CD4-positive, alpha-beta T cell (primary cell): ENCODE measurements at regions of chr3 and their contacts with region 1.

Region 1: GRCh38 chr3:42961633-42962032 is 17.5 kb upstream of the GASK1A start:
- DNase-seq: peak in 7 of 14 experiments; percentile 4 to 66 (median 54)
- ATAC-seq: no peak
- H3K4me3 ChIP-seq: no peak overlapping the region
- H3K4me3 Mint-ChIP-seq: no peak overlapping the region
- H3K27ac ChIP-seq: no peak overlapping the region
- H3K27ac Mint-ChIP-seq: no peak overlapping the region
- H3K4me1 ChIP-seq: peaks cover 12% of the 10 kb centered on the region
- H3K4me1 Mint-ChIP-seq: peaks cover 37% of the 10 kb centered on the region
- H3K27me3 ChIP-seq: no peaks in the 10 kb centered on the region
- H3K27me3 Mint-ChIP-seq: peaks cover 4% of the 10 kb centered on the region
- CTCF ChIP-seq: peak; percentile 71

Region 2: DNA sequence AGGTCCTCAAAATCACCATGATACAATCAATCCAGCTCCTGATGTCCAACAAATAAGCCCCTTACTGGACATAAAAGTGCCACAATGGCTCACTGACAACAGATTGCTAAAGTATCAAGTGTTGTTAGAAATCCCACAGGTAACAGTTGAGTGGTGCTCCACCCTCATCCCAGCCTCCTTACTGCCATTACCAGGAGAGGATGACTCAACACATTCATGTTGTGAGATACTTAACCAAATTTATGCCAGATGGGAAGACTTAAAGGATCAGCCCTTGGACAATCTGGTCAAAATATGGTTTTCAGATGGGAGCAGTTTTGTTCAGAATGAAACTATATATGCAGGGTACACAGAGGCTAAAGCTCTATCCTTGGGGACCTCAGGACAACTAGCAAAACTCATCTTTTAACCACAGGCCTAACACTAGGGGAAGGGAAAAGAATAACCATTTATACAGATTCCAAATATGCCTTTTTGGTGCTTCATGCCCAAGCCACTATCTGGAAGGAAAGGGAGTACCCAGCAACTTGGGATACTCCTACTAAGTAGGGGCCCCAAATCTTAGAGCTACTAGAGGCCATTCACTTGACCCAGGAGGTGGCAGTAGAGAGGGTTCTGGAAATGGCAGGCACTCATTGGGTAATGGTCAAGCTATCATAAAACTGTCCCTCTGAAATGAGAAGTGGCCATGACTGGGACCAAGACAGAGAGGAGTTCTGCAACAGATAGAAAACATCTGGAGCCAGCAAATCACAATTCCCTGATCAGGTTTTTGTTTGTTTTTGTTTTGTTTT is 62.6 kb before region 1 on chr3:
- CTCF ChIA-PET with region 1: no interaction called
- POLR2A ChIA-PET with region 1: no interaction called
- intact Hi-C with region 1: no loop called
- DNase-seq: no peak
- ATAC-seq: no peak
- H3K4me3 ChIP-seq: no peak overlapping the region
- H3K4me3 Mint-ChIP-seq: no peak overlapping the region
- H3K27ac ChIP-seq: no peak overlapping the region
- H3K27ac Mint-ChIP-seq: no peak overlapping the region
- H3K4me1 ChIP-seq: no peaks in the 10 kb centered on the region
- H3K4me1 Mint-ChIP-seq: no peaks in the 10 kb centered on the region
- H3K27me3 ChIP-seq: peaks cover 0 to 6% of the 10 kb centered on the region in 2 experiments
- H3K27me3 Mint-ChIP-seq: peaks cover 13% of the 10 kb centered on the region
- CTCF ChIP-seq: no peak

Region 3: DNA sequence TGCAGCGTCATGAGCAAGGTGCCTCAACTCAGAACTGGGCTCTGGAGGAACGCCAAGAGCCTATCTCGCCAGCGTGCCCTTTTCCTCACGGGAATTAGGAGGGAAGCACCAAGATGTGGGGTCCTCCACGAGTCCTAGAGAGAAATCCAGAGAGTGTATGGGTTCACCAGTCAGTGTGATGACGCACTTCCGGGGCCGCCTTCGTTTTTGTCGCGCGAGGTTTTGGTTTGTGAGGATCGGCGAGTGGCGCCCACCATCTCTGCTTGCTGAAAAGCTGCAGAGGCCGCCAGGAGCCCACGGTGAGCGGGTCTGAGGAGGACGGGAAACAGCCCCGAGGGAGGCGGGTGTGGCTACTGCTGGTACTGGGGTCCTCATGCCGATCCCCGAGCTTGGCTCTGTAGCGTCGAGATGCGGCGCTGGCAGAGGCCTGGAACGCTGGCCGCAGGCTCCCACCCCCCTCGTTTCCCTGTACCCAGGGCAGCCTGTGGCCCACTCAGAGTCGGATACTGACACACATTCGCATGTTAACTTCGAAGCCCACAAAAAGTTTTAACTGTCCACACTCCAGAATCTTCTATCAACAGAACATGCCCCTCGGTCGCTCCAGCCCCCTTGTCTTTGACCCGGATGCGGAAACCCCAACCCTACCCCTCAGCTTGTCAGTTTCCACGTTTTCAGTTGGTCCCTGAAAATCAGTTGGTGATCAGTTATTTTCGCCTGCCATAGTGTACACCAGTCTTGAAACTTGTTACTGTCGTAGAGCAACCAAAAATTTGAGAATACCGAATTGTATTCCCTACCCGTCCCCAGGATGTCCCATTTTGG is 25.3 kb before region 1 on chr3:
- CTCF ChIA-PET with region 1: no interaction called
- POLR2A ChIA-PET with region 1: no interaction called
- intact Hi-C with region 1: no loop called
- DNase-seq: no peak
- ATAC-seq: no peak
- H3K4me3 ChIP-seq: no peak overlapping the region
- H3K4me3 Mint-ChIP-seq: no peak overlapping the region
- H3K27ac ChIP-seq: no peak overlapping the region
- H3K27ac Mint-ChIP-seq: no peak overlapping the region
- H3K4me1 ChIP-seq: peaks cover 18% of the 10 kb centered on the region
- H3K4me1 Mint-ChIP-seq: peaks cover 29% of the 10 kb centered on the region
- H3K27me3 ChIP-seq: no peaks in the 10 kb centered on the region
- H3K27me3 Mint-ChIP-seq: no peaks in the 10 kb centered on the region
- CTCF ChIP-seq: no peak

Region 4: GRCh38 chr3:42979044-42979972 is 17.7 kb after region 1 on chr3 and contains the start of gene GASK1A:
- CTCF ChIA-PET with region 1: no interaction called
- POLR2A ChIA-PET with region 1: no interaction called
- intact Hi-C with region 1: no loop called
- DNase-seq: peak in 5 of 14 experiments; percentile 8 to 36 (median 34)
- ATAC-seq: peak; percentile 32
- H3K4me3 ChIP-seq: peak within 1 kb of the TSS; percentile 47
- H3K4me3 Mint-ChIP-seq: peak within 1 kb of the TSS; percentile 78
- H3K27ac ChIP-seq: no peak within 1 kb of the TSS
- H3K27ac Mint-ChIP-seq: no peak within 1 kb of the TSS
- H3K4me1 ChIP-seq: peaks cover 11% of the 10 kb centered on the region
- H3K4me1 Mint-ChIP-seq: peaks cover 7% of the 10 kb centered on the region
- H3K27me3 ChIP-seq: peaks cover 28 to 31% of the 10 kb centered on the region in 2 experiments
- H3K27me3 Mint-ChIP-seq: peaks cover 38% of the 10 kb centered on the region
- CTCF ChIP-seq: no peak
- total RNA-seq, gene GASK1A: 0.28 TPM in 1 of 2 experiments, not detected in the other

Region 5: GRCh38 chr3:43071313-43071893 is 109.8 kb after region 1 on chr3:
- CTCF ChIA-PET with region 1: interaction called, 8 read pairs
- POLR2A ChIA-PET with region 1: no interaction called
- intact Hi-C with region 1: loop called (anchors 2 kb)
- DNase-seq: peak in 6 of 14 experiments; percentile 4 to 60 (median 43)
- ATAC-seq: no peak
- H3K4me3 ChIP-seq: no peak overlapping the region
- H3K4me3 Mint-ChIP-seq: no peak overlapping the region
- H3K27ac ChIP-seq: no peak overlapping the region
- H3K27ac Mint-ChIP-seq: no peak overlapping the region
- H3K4me1 ChIP-seq: peaks cover 4% of the 10 kb centered on the region
- H3K4me1 Mint-ChIP-seq: no peaks in the 10 kb centered on the region
- H3K27me3 ChIP-seq: no peaks in the 10 kb centered on the region
- H3K27me3 Mint-ChIP-seq: no peaks in the 10 kb centered on the region
- CTCF ChIP-seq: peak; percentile 60

Region 6: GRCh38 chr3:43087249-43087776 is 125.7 kb after region 1 on chr3:
- CTCF ChIA-PET with region 1: interaction called, 3 read pairs
- POLR2A ChIA-PET with region 1: interaction called, 4 read pairs
- intact Hi-C with region 1: loop called (anchors 1 to 5 kb)
- DNase-seq: peak in 4 of 14 experiments; percentile 10 to 32 (median 20)
- ATAC-seq: no peak
- H3K4me3 ChIP-seq: no peak overlapping the region
- H3K4me3 Mint-ChIP-seq: no peak overlapping the region
- H3K27ac ChIP-seq: no peak overlapping the region
- H3K27ac Mint-ChIP-seq: no peak overlapping the region
- H3K4me1 ChIP-seq: no peaks in the 10 kb centered on the region
- H3K4me1 Mint-ChIP-seq: peaks cover under 1% of the 10 kb centered on the region
- H3K27me3 ChIP-seq: no peaks in the 10 kb centered on the region
- H3K27me3 Mint-ChIP-seq: no peaks in the 10 kb centered on the region
- CTCF ChIP-seq: no peak

Region 7: DNA sequence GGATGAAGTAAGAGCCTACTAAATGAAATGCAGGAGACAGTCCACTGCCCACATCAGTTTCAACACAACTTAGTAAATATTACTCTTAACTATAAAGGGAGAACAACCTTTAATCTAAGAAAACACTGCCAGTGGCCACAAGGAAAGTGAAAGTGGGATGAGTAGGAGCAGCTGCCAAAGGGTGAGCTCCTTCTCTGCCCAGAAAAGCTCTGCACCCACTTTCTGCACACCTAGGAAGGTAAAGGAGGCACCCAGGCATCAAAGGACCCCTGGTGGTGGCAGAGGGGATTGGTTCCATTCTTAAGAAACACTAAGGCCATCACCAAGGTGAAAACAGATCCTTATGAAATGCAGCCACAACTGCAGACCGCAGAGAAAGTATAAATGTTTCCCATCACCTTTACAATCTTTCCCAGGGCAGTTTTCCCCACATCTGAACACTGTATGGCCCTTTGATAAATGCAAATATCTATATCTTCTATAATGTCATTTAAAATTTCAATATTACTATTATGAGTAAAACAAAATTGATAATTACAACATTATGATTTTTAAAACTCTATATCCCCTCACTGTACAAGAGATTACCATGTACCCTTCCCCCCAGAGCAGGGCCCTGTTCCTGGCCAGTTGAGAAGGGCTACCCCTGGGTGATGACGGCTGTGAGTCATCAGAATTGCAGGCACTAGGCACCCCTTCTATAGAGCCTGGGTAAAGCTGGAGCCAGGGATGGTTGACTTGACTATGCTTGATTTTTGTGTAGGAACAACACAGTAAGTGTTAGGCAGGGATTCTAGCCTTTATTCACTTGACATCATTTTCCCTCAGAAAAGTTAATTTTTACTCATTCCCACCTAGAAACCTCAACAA is 416.7 kb after region 1 on chr3:
- CTCF ChIA-PET with region 1: no interaction called
- POLR2A ChIA-PET with region 1: no interaction called
- intact Hi-C with region 1: loop called (anchors 1 to 5 kb)
- DNase-seq: peak; percentile 62 to 86 (median 68)
- ATAC-seq: peak; percentile 99
- H3K4me3 ChIP-seq: no peak overlapping the region
- H3K4me3 Mint-ChIP-seq: no peak overlapping the region
- H3K27ac ChIP-seq: no peak overlapping the region
- H3K27ac Mint-ChIP-seq: peak overlapping the region; percentile 50
- H3K4me1 ChIP-seq: peaks cover 16% of the 10 kb centered on the region
- H3K4me1 Mint-ChIP-seq: peaks cover 17% of the 10 kb centered on the region
- H3K27me3 ChIP-seq: no peaks in the 10 kb centered on the region
- H3K27me3 Mint-ChIP-seq: no peaks in the 10 kb centered on the region
- CTCF ChIP-seq: peak; percentile 86

Region 8: DNA sequence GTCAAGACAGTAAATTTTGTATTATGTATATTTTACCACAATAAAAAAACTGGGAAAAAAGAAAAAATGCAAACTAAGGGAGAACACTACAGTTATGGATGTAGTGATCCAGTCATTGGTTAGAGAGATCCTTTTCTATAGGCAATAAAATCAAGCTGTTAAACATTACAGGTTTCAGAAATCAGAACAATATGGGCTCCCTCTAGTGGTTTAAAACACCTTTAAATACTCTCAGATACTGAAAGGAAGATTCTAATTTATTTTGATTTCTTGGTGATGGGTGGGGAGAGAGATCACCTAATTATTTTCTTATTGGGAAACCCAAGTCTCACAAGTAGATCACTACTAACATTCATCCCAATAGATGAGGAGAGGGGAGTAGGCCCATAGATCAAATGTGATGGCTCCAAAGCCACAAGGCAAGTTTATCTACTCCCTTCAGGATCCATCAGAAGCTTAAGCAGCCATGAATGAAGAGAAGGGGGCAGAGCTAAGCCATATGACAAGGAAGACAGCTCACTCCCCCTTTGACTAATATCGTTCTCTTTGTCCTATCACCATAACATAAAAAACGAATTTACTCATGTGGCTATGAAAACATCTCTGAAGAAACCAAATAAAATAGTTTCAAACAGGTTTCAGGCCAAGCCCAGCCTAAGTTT is 541.6 kb after region 1 on chr3:
- CTCF ChIA-PET with region 1: interaction called, 8 read pairs
- POLR2A ChIA-PET with region 1: no interaction called
- intact Hi-C with region 1: loop called (anchors 1 to 2 kb)
- DNase-seq: peak in 3 of 14 experiments; percentile 64 to 71 (median 67)
- ATAC-seq: peak; percentile 63
- H3K4me3 ChIP-seq: no peak overlapping the region
- H3K4me3 Mint-ChIP-seq: no peak overlapping the region
- H3K27ac ChIP-seq: no peak overlapping the region
- H3K27ac Mint-ChIP-seq: peak overlapping the region; percentile 31
- H3K4me1 ChIP-seq: peaks cover 26% of the 10 kb centered on the region
- H3K4me1 Mint-ChIP-seq: peaks cover 50% of the 10 kb centered on the region
- H3K27me3 ChIP-seq: no peaks in the 10 kb centered on the region
- H3K27me3 Mint-ChIP-seq: no peaks in the 10 kb centered on the region
- CTCF ChIP-seq: peak; percentile 68

Region 9: GRCh38 chr3:43638594-43639447 is 677.2 kb after region 1 on chr3:
- CTCF ChIA-PET with region 1: no interaction called
- POLR2A ChIA-PET with region 1: no interaction called
- intact Hi-C with region 1: loop called in 1 of 2 experiments (anchors 10 kb)
- DNase-seq: peak in 10 of 14 experiments; percentile 8 to 62 (median 28)
- ATAC-seq: peak; percentile 43
- H3K4me3 ChIP-seq: no peak overlapping the region
- H3K4me3 Mint-ChIP-seq: no peak overlapping the region
- H3K27ac ChIP-seq: no peak overlapping the region
- H3K27ac Mint-ChIP-seq: no peak overlapping the region
- H3K4me1 ChIP-seq: peaks cover 3% of the 10 kb centered on the region
- H3K4me1 Mint-ChIP-seq: no peaks in the 10 kb centered on the region
- H3K27me3 ChIP-seq: no peaks in the 10 kb centered on the region
- H3K27me3 Mint-ChIP-seq: peaks cover 9% of the 10 kb centered on the region
- CTCF ChIP-seq: no peak

Region 10: DNA sequence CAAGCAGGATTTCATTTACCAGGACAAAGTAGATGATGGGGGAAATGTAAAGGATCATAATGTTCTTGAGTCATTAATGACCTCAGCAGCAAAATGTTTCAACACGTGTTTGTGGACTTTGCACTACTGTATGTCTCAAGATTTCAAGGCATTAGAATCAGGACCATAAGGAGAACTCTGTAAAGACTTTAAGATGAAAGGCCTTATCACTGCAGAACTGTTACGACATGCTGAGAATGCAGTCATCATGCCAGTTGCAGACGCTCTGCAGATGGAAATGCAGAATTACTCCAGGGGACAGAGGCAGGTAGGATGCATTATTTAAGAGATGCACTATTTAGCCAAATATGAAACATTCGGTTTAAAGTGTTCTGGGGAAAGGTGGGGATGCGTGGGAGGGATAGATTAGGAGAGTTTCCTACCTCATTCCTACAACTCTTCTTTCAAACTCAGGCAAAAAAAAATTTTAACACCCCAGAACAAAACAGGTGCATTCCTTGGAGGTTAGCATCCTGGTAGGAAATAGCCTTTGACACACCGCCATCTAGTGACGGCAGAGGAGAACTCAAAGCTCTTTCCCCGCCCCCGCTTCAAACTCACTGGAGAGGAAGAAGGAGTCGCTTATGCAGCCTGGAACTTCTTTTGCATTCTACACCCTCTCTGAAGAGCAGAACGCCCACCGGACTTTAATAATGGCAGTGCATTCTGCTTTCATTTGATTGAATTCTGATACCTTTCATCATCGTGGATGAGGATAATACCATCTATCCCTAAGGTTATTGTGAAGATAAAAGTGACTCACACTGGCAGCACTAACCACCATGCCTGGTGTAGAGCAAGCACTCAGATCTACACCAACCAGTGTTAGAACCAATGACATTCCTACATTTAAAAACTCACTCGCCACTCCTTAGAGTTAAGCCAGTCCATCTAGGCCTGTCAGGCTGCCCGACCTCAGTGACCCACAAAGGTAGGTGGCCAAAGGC is 1236.9 kb after region 1 on chr3:
- CTCF ChIA-PET with region 1: no interaction called
- POLR2A ChIA-PET with region 1: no interaction called
- intact Hi-C with region 1: loop called in 1 of 2 experiments (anchors 5 kb)
- DNase-seq: peak; percentile 44 to 79 (median 55)
- ATAC-seq: peak; percentile 78
- H3K4me3 ChIP-seq: no peak overlapping the region
- H3K4me3 Mint-ChIP-seq: no peak overlapping the region
- H3K27ac ChIP-seq: no peak overlapping the region
- H3K27ac Mint-ChIP-seq: no peak overlapping the region
- H3K4me1 ChIP-seq: peaks cover 5% of the 10 kb centered on the region
- H3K4me1 Mint-ChIP-seq: no peaks in the 10 kb centered on the region
- H3K27me3 ChIP-seq: peaks cover under 1 to 10% of the 10 kb centered on the region in 2 experiments
- H3K27me3 Mint-ChIP-seq: peaks cover 43% of the 10 kb centered on the region
- CTCF ChIP-seq: peak; percentile 87